ENCODE measurements at regions of chr13 and their contacts with region 1.

Region 1: GRCh38 chr13:30465585-30466357 is at the start of gene HMGB1:
- DNase-seq: peak; percentile 86
- ATAC-seq: peak; percentile 83
- H3K4me3 Mint-ChIP-seq: peak within 1 kb of the TSS; percentile 93
- H3K27ac Mint-ChIP-seq: peak within 1 kb of the TSS; percentile 99
- H3K4me1 Mint-ChIP-seq: peaks cover 42% of the 10 kb centered on the region
- H3K27me3 Mint-ChIP-seq: peaks cover 3% of the 10 kb centered on the region
- CTCF ChIP-seq: no peak
- total RNA-seq, gene HMGB1: 338 and 354 TPM in 2 replicates

Region 2: GRCh38 chr13:29595380-29596063 is 870.2 kb before region 1 on chr13 and contains the start of gene SLC7A1:
- CTCF ChIA-PET with region 1: no interaction called
- POLR2A ChIA-PET with region 1: no interaction called
- intact Hi-C with region 1: loop called (anchors 10 kb)
- DNase-seq: peak; percentile 82
- ATAC-seq: peak; percentile 87
- H3K4me3 Mint-ChIP-seq: peak within 1 kb of the TSS; percentile 91
- H3K27ac Mint-ChIP-seq: peak within 1 kb of the TSS; percentile 88
- H3K4me1 Mint-ChIP-seq: peaks cover 33% of the 10 kb centered on the region
- H3K27me3 Mint-ChIP-seq: peaks cover 1% of the 10 kb centered on the region
- CTCF ChIP-seq: no peak
- total RNA-seq, gene SLC7A1: 83.5 and 85.0 TPM in 2 replicates

Region 3: GRCh38 chr13:30257468-30258099 is 208.2 kb before region 1 on chr13:
- CTCF ChIA-PET with region 1: no interaction called
- POLR2A ChIA-PET with region 1: interaction called, 4 read pairs
- intact Hi-C with region 1: loop called (anchors 5 kb)
- DNase-seq: no peak
- ATAC-seq: no peak
- H3K4me3 Mint-ChIP-seq: no peak overlapping the region
- H3K27ac Mint-ChIP-seq: no peak overlapping the region
- H3K4me1 Mint-ChIP-seq: peaks cover 12% of the 10 kb centered on the region
- H3K27me3 Mint-ChIP-seq: no peaks in the 10 kb centered on the region
- CTCF ChIP-seq: no peak

Region 4: GRCh38 chr13:30395192-30396084 is 70.3 kb before region 1 on chr13:
- CTCF ChIA-PET with region 1: no interaction called
- POLR2A ChIA-PET with region 1: interaction called, 20 read pairs
- intact Hi-C with region 1: loop called (anchors 1 kb)
- DNase-seq: peak; percentile 52
- ATAC-seq: peak; percentile 78
- H3K4me3 Mint-ChIP-seq: peak overlapping the region; percentile 97
- H3K27ac Mint-ChIP-seq: peak overlapping the region; percentile 91
- H3K4me1 Mint-ChIP-seq: peaks cover 29% of the 10 kb centered on the region
- H3K27me3 Mint-ChIP-seq: no peaks in the 10 kb centered on the region
- CTCF ChIP-seq: no peak

Region 5: GRCh38 chr13:30477346-30478195 is 11.8 kb after region 1 on chr13:
- CTCF ChIA-PET with region 1: no interaction called
- POLR2A ChIA-PET with region 1: no interaction called
- intact Hi-C with region 1: loop called (anchors 1 kb)
- DNase-seq: no peak
- ATAC-seq: peak; percentile 95
- H3K4me3 Mint-ChIP-seq: no peak overlapping the region
- H3K27ac Mint-ChIP-seq: no peak overlapping the region
- H3K4me1 Mint-ChIP-seq: peaks cover 12% of the 10 kb centered on the region
- H3K27me3 Mint-ChIP-seq: no peaks in the 10 kb centered on the region
- CTCF ChIP-seq: no peak

Region 6: GRCh38 chr13:30673669-30674521 is 208.1 kb after region 1 on chr13:
- CTCF ChIA-PET with region 1: no interaction called
- POLR2A ChIA-PET with region 1: no interaction called
- intact Hi-C with region 1: loop called (anchors 1 kb)
- DNase-seq: peak; percentile 94
- ATAC-seq: peak; percentile 93
- H3K4me3 Mint-ChIP-seq: peak overlapping the region; percentile 92
- H3K27ac Mint-ChIP-seq: peak overlapping the region; percentile 92
- H3K4me1 Mint-ChIP-seq: peaks cover 29% of the 10 kb centered on the region
- H3K27me3 Mint-ChIP-seq: no peaks in the 10 kb centered on the region
- CTCF ChIP-seq: no peak

Region 7: DNA sequence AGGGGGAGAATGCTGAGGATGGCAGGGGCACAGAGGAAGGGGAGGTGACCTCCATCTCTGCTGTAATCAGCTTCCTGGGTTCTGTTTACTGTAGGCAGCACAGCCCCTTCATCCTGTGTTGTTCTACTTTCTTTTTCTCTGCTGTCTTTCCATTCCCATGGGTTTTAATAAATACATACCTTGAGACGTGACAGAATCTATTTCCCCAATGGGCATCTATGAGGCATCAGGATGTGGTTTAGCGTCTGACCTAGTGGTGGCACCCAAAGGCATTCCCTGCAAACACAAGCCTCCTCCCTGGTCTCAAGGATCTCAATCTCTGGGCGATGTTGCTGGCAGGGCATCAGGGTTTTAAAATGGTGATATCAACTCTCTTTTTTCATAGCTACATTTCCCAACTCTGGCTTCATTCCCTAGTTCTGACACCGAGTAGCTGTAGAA is 330.4 kb after region 1 on chr13:
- CTCF ChIA-PET with region 1: no interaction called
- POLR2A ChIA-PET with region 1: no interaction called
- intact Hi-C with region 1: no loop called
- DNase-seq: no peak
- ATAC-seq: peak; percentile 47
- H3K4me3 Mint-ChIP-seq: peak overlapping the region; percentile 24
- H3K27ac Mint-ChIP-seq: no peak overlapping the region
- H3K4me1 Mint-ChIP-seq: peaks cover 20% of the 10 kb centered on the region
- H3K27me3 Mint-ChIP-seq: no peaks in the 10 kb centered on the region
- CTCF ChIP-seq: no peak

Measured in activated B cell treated with CpG ODN at 0.5 μM for 24 hours (primary cell).